Posterior vena cava (tissue), 2 donors: ENCODE measurements at regions of chr4 and their contacts with region 1.

Region 1: DNA sequence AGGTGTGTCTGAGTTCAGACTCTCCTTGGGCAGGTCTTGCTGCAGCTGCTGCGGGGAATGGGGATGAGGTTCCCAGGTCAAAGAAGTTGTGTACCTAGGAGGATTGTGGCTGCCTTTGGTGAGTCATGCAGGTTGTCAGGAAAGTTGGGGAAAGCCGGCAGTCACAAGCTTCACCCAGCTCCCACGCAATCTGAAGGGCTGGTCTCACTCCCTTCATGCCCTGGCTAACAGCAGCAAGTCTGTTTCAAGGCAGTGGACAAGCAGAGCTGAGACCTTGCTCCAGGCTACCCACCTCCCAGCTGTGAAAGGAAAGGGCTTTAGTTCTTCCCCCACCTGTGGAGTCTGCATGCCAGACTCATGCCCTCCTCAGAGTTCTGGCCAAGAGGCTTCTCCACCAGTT is 287.2 kb downstream of the DTHD1 start:
- DNase-seq: no peak

Region 2: DNA sequence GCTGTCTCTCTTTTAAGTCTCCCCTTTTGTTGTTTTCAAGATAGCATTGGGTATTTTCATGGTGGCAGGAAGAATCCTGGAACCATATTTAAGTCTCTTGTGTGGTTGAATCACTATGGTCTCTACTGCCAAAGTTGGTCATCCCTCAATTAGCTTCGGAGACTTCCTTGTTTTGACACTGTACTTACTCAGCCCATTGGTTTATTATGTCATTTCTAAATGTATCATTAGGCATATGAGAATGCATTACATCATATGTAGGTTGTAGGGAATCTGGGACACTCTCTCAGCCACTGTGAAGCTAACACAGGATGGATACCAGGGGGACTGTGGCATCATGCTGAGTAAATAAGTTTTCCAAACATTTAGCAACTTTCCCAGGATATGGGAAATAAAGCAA is 75.3 kb before region 1 on chr4:
- intact Hi-C with region 1: no loop called
- DNase-seq: no peak

Region 3: DNA sequence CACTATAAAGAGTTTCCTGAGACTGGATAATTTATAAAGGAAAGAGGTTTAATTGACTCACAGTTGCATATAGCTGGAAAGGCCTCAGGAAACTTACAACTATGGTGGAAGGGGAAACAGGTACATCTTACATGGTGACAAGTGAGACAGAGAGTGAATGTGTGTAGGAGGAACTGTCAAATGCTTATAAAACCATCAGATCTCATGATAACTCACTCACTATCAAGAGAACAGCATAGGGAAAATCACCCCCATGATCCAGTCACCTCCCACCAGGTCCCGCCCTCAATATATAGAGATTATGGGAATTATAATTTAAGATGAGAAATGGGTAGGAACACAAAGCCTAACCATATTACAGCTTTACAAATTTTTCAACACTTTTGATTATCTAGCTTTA is 21.2 kb before region 1 on chr4:
- intact Hi-C with region 1: loop called in 1 of 2 experiments (anchors 2 kb)
- DNase-seq: no peak